PC-9 (cell line): ENCODE measurements at regions of chr3 and their contacts with region 1.

Region 1: GRCh38 chr3:160163229-160163878 is 61.9 kb upstream of the C3orf80 start:
- DNase-seq: no peak
- H3K4me3 ChIP-seq: no peak overlapping the region
- H3K27ac ChIP-seq: no peak overlapping the region
- H3K4me1 ChIP-seq: no peaks in the 10 kb centered on the region
- H3K27me3 ChIP-seq: no peaks in the 10 kb centered on the region
- CTCF ChIP-seq: peak; percentile 72

Region 2: GRCh38 chr3:160038862-160039562 is 124.3 kb before region 1 on chr3:
- CTCF ChIA-PET with region 1: no interaction called
- POLR2A ChIA-PET with region 1: no interaction called
- intact Hi-C with region 1: loop called (anchors 10 kb)
- DNase-seq: peak in 1 of 2 experiments; percentile 43
- H3K4me3 ChIP-seq: peak overlapping the region; percentile 16; the same call in 1 of the 2 replicates
- H3K27ac ChIP-seq: no peak overlapping the region
- H3K4me1 ChIP-seq: no peaks in the 10 kb centered on the region
- H3K27me3 ChIP-seq: no peaks in the 10 kb centered on the region
- CTCF ChIP-seq: no peak

Region 3: DNA sequence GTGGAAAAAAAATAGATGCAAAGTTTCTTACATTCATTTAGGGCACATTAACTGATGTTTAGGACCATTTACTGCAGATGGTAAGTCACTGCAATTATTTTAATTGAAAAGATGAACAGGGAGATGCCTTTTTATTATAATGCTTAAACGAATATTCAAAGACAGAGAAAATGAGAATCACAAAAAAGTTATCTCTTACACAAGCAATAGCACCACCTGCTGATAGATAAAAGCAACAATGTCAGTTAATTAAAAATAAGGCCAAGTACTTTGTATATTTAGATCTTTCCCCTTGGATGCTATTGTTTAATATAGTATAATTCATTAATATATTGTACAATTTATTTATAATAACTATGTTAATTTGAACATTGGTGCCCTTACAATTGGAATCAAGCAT is 179.8 kb after region 1 on chr3:
- CTCF ChIA-PET with region 1: no interaction called
- POLR2A ChIA-PET with region 1: no interaction called
- intact Hi-C with region 1: loop called (anchors 2 kb)
- DNase-seq: no peak
- H3K4me3 ChIP-seq: no peak overlapping the region
- H3K27ac ChIP-seq: no peak overlapping the region
- H3K4me1 ChIP-seq: no peaks in the 10 kb centered on the region
- H3K27me3 ChIP-seq: no peaks in the 10 kb centered on the region
- CTCF ChIP-seq: peak; percentile 77

Region 4: GRCh38 chr3:160486459-160486869 is 323.1 kb after region 1 on chr3:
- CTCF ChIA-PET with region 1: no interaction called
- POLR2A ChIA-PET with region 1: no interaction called
- intact Hi-C with region 1: loop called (anchors 10 kb)
- DNase-seq: no peak
- H3K4me3 ChIP-seq: no peak overlapping the region
- H3K27ac ChIP-seq: no peak overlapping the region
- H3K4me1 ChIP-seq: no peaks in the 10 kb centered on the region
- H3K27me3 ChIP-seq: no peaks in the 10 kb centered on the region
- CTCF ChIP-seq: peak; percentile 85